ENCODE measurements at regions of chr12 and their contacts with region 1.

Region 1: DNA sequence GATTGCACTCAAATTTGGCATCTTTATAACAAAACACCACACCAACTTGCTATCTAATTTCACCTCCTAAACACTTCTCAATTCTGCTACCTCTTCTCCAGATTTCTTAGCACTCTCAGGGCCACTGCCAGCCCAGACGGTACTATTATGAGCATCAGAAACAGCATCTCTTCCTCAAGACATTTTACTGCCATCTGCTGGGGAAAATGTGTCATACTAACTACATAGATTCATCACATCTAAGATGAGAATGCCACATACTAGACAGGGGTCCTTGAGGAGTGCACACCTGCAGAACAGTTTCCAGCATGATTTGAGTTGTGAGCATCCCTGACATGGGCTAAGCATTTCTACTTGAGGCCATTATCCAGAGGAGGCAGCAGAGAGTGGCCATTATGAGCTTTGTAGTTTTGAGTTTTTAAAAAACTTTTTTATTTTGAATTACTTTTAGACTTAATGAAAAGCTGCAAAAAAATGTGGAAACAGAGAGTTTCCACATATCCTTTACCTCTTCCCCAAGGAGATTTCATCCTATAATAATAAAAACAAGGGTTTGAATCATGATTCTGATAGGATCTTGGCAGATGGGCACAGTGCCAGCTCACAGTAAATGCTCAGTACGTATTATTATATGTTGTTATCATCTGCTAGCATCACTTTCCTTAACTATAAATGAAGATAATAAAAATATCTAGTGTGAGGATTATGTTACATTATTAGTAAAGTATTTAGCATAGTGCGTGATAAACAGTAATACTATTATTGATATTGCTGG is 15.2 kb upstream of the GRIP1 start:
- DNase-seq: peak; percentile 36
- H3K4me3 ChIP-seq: no peak overlapping the region
- H3K27ac ChIP-seq: no peak overlapping the region
- H3K27me3 ChIP-seq: peaks cover 7% of the 10 kb centered on the region
- CTCF ChIP-seq: peak; percentile 65

Region 2: GRCh38 chr12:66679461-66680084 is 14.5 kb before region 1 on chr12:
- CTCF ChIA-PET with region 1: interaction called, 18 read pairs
- POLR2A ChIA-PET with region 1: no interaction called
- DNase-seq: no peak
- H3K4me3 ChIP-seq: no peak overlapping the region
- H3K27ac ChIP-seq: no peak overlapping the region
- H3K27me3 ChIP-seq: peaks cover 5% of the 10 kb centered on the region
- CTCF ChIP-seq: no peak

Region 3: DNA sequence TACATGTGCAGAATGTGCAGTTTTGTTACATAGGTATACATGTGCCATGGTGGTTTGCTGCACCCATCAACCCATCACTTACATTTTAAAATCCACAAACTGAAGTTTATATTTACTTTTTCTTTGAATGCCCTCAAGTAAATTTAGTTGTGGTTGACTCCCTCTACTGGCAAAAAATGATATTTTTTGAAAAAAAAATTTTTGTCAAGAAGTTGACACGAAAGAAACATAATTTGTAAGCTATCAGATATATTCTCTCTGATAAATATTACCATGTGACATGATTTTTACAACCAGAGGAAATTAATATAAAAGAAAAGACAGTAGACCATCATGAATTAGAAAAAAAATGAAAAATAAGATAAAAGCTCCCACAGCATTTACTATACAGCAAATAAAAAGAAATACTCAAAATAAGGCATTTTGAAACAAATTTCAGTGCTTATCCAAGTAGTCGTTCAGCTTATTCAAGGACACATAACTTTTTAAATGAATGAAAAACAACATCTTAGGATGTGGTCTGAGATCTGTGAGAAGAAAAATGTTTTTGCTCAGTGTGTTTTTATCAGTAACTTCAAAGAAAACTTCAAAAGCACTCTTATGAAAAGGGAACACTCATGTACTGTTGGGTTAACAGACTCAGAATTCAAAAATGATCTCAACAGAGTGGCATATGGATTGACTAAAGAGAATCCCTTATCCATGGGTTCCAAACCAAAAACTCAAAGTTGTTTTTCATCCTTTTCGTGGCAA is 14.8 kb after region 1 on chr12:
- CTCF ChIA-PET with region 1: interaction called, 49 read pairs
- POLR2A ChIA-PET with region 1: no interaction called
- DNase-seq: no peak
- H3K4me3 ChIP-seq: no peak overlapping the region
- H3K27ac ChIP-seq: no peak overlapping the region
- H3K27me3 ChIP-seq: no peaks in the 10 kb centered on the region
- CTCF ChIP-seq: peak; percentile 43; the same call in 1 of the 2 replicates

Region 4: GRCh38 chr12:66776974-66777373 is 82.9 kb after region 1 on chr12:
- CTCF ChIA-PET with region 1: no interaction called
- POLR2A ChIA-PET with region 1: no interaction called
- DNase-seq: no peak
- H3K4me3 ChIP-seq: no peak overlapping the region
- H3K27ac ChIP-seq: no peak overlapping the region
- H3K27me3 ChIP-seq: no peaks in the 10 kb centered on the region
- CTCF ChIP-seq: no peak

Measured in AG04450 (cell line).